ENCODE measurements at regions of chr9 and their contacts with region 1.

Region 1: GRCh38 chr9:137114610-137115391 is at the start of gene DPP7:
- DNase-seq: peak; percentile 87
- H3K4me3 ChIP-seq: peak within 1 kb of the TSS; percentile 67 to 86 (median 74)
- H3K27ac ChIP-seq: peak within 1 kb of the TSS; percentile 44 to 66 (median 52)
- H3K4me1 ChIP-seq: peaks cover 0 to 18% (median 14%) of the 10 kb centered on the region in 4 donors
- H3K27me3 ChIP-seq: no peaks in the 10 kb centered on the region
- CTCF ChIP-seq: no peak
- EP300 ChIP-seq: no peak
- POLR2A ChIP-seq: no peak
- total RNA-seq, gene DPP7: 88.5 to 140 (median 111) TPM

Region 2: DNA sequence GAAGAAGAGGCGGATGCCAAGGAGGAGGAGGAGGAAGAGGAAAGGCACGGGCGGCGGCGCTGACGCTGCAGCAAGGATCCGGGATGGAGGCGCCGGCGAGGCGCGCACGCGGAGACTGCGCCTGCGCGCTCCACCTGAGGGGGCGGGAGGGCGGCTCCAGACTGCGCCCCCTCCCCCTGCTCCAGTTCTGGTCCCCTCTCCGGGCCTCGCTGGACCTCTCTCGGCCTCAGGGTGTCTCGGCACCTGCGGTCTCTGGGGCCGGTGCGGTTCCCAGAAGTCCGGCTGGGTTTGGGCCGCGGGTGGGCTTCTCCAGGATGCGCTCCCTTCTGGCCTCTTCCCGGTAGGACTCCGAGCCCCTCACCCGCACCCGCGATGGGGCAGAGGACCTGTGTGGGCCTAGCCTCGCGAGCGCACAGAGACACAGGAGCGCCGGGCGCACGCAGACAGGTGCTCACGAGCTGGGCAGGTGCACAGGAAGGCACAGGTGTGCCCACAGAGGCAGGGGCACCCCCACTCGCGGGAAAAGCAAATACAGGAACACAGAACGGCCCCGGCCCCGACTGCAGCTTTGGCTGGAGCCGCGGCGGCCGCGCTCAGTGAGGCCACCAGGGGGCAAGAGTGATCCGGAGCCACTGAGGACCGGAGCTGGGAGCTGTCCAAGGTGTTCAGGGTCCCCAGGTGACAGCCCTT is 68.6 kb before region 1 on chr9 and contains the start of gene NPDC1:
- intact Hi-C with region 1: no loop called
- DNase-seq: peak; percentile 87
- H3K4me3 ChIP-seq: peak within 1 kb of the TSS; percentile 40 to 74 (median 65)
- H3K27ac ChIP-seq: peak within 1 kb of the TSS; percentile 65 to 72 (median 68)
- H3K4me1 ChIP-seq: peaks cover 0 to 43% (median 38%) of the 10 kb centered on the region in 4 donors
- H3K27me3 ChIP-seq: peaks cover 22 to 45% (median 41%) of the 10 kb centered on the region in 3 donors
- CTCF ChIP-seq: peak; percentile 78 to 84 (median 81)
- EP300 ChIP-seq: no peak
- POLR2A ChIP-seq: no peak
- total RNA-seq, gene NPDC1: 21.4 to 101 (median 42.4) TPM

Region 3: GRCh38 chr9:137086531-137087408 is 28.0 kb before region 1 on chr9 and contains the start of gene MAN1B1:
- intact Hi-C with region 1: loop called (anchors 2 kb)
- DNase-seq: peak; percentile 99
- H3K4me3 ChIP-seq: peak within 1 kb of the TSS; percentile 63 to 88 (median 82)
- H3K27ac ChIP-seq: peak within 1 kb of the TSS; percentile 92 to 97 (median 96)
- H3K4me1 ChIP-seq: peaks cover 0 to 40% (median 29%) of the 10 kb centered on the region in 4 donors
- H3K27me3 ChIP-seq: peaks cover 0 to 5% (median 0%) of the 10 kb centered on the region in 3 donors
- CTCF ChIP-seq: no peak
- EP300 ChIP-seq: peak in 1 of 4 donors; percentile 38
- POLR2A ChIP-seq: peak; percentile 52 to 78
- total RNA-seq, gene MAN1B1: 27.8 to 34.9 (median 28.7) TPM